ENCODE measurements at regions of chr4 and their contacts with region 1.

Region 1: GRCh38 chr4:4488405-4489404 is 53.1 kb downstream of the STX18 start:
- DNase-seq: peak; percentile 55 to 85
- ATAC-seq: peak; percentile 92 to 99 (median 93)
- H3K4me3 ChIP-seq: no peak overlapping the region
- H3K4me3 Mint-ChIP-seq: no peak overlapping the region
- H3K27ac ChIP-seq: no peak overlapping the region
- H3K27ac Mint-ChIP-seq: no peak overlapping the region
- H3K4me1 ChIP-seq: no peaks in the 10 kb centered on the region
- H3K4me1 Mint-ChIP-seq: peaks cover 11 to 15% of the 10 kb centered on the region in 2 donors
- H3K27me3 ChIP-seq: no peaks in the 10 kb centered on the region
- H3K27me3 Mint-ChIP-seq: no peaks in the 10 kb centered on the region
- CTCF ChIP-seq: peak; percentile 96

Region 2: GRCh38 chr4:4555916-4556315 is 67.2 kb after region 1 on chr4:
- intact Hi-C with region 1: no loop called
- DNase-seq: no peak
- ATAC-seq: no peak
- H3K4me3 ChIP-seq: no peak overlapping the region
- H3K4me3 Mint-ChIP-seq: no peak overlapping the region
- H3K27ac ChIP-seq: no peak overlapping the region
- H3K27ac Mint-ChIP-seq: no peak overlapping the region
- H3K4me1 ChIP-seq: no peaks in the 10 kb centered on the region
- H3K4me1 Mint-ChIP-seq: no peaks in the 10 kb centered on the region
- H3K27me3 ChIP-seq: no peaks in the 10 kb centered on the region
- H3K27me3 Mint-ChIP-seq: no peaks in the 10 kb centered on the region
- CTCF ChIP-seq: no peak

Region 3: DNA sequence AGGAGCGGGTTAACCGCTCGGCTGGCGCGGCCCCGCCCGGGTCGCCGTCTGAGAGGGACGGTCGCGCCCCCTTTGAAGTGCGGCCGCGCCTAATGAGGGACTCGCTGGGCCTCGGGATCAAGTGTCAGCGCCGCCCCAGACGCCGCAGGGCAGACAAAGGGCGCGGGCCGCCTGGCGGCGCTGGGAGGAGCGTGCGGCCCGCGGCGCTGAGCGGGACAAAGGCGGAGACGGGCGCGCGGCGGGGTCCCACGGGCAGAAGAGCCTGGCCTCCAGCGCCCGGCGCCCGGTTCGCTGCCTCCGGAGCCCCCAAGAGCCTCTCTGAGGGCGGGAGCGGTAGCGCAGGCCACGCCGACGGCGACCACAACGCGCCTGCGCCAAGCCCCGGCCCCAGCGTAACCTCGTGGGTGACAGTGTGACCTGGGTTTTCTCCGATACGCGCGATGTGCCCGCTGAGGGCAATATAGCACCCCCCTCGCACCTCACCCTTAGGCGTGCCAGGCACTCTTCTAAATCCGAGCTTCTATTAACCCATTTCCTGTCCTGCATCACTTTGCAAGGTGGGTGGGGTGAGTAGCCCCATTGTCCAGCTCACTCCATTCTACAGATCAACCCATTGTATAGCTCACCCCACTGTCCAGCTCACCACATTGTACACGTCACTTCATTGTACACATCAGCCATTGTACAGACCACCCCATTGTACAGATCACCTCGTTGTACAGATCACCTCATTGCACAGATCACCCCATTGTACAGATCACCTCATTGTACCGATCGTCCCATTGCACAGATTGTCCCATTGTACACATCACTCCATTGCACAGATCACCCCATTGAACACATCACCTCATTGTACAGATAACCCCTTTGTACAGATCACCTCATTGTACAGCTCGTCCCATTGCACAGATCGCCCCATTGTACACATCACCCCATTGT is 86.8 kb after region 1 on chr4:
- intact Hi-C with region 1: loop called (anchors 1 kb)
- DNase-seq: peak; percentile 62 to 80
- ATAC-seq: peak; percentile 87 to 91 (median 90)
- H3K4me3 ChIP-seq: peak overlapping the region; percentile 53
- H3K4me3 Mint-ChIP-seq: peak overlapping the region; percentile 87
- H3K27ac ChIP-seq: peak overlapping the region; percentile 41
- H3K27ac Mint-ChIP-seq: peak overlapping the region; percentile 14 to 82
- H3K4me1 ChIP-seq: peaks cover 11% of the 10 kb centered on the region
- H3K4me1 Mint-ChIP-seq: peaks cover 15 to 18% of the 10 kb centered on the region in 2 donors
- H3K27me3 ChIP-seq: no peaks in the 10 kb centered on the region
- H3K27me3 Mint-ChIP-seq: no peaks in the 10 kb centered on the region
- CTCF ChIP-seq: peak; percentile 34

Region 4: DNA sequence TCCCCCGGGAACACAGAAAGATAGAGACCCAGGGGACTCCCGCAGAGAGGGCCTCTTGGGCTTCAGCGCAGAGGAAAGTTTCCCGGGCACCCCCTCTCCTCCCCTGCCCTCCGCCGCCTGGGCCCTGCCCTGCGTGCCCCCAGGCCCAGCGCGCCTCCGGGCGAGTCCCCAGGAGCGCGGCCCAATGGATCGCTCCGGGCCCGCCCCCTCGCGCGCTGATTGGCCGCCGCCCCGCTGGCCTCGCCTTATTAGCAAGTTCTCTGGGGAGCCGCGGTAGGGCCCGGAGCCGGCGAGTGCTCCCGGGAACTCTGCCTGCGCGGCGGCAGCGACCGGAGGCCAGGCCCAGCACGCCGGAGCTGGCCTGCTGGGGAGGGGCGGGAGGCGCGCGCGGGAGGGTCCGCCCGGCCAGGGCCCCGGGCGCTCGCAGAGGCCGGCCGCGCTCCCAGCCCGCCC is 370.7 kb after region 1 on chr4 and contains the start of gene MSX1:
- intact Hi-C with region 1: loop called (anchors 10 kb)
- DNase-seq: peak; percentile 54 to 55
- ATAC-seq: peak; percentile 72 to 84 (median 79)
- H3K4me3 ChIP-seq: peak within 1 kb of the TSS; percentile 34
- H3K4me3 Mint-ChIP-seq: peak within 1 kb of the TSS; percentile 92
- H3K27ac ChIP-seq: no peak within 1 kb of the TSS
- H3K27ac Mint-ChIP-seq: peak within 1 kb of the TSS in 1 of 2 donors; percentile 44
- H3K4me1 ChIP-seq: peaks cover 55% of the 10 kb centered on the region
- H3K4me1 Mint-ChIP-seq: peaks cover 48 to 49% of the 10 kb centered on the region in 2 donors
- H3K27me3 ChIP-seq: peaks cover 77% of the 10 kb centered on the region
- H3K27me3 Mint-ChIP-seq: peaks cover 73 to 87% of the 10 kb centered on the region in 2 donors
- CTCF ChIP-seq: no peak
- total RNA-seq, gene MSX1: not detected

Region 5: GRCh38 chr4:4995103-4995907 is 506.6 kb after region 1 on chr4:
- intact Hi-C with region 1: loop called (anchors 2 kb)
- DNase-seq: peak; percentile 51 to 55
- ATAC-seq: peak; percentile 34 to 55 (median 54)
- H3K4me3 ChIP-seq: no peak overlapping the region
- H3K4me3 Mint-ChIP-seq: no peak overlapping the region
- H3K27ac ChIP-seq: no peak overlapping the region
- H3K27ac Mint-ChIP-seq: no peak overlapping the region
- H3K4me1 ChIP-seq: peaks cover 21% of the 10 kb centered on the region
- H3K4me1 Mint-ChIP-seq: peaks cover 30 to 33% of the 10 kb centered on the region in 2 donors
- H3K27me3 ChIP-seq: no peaks in the 10 kb centered on the region
- H3K27me3 Mint-ChIP-seq: peaks cover 15 to 24% of the 10 kb centered on the region in 2 donors
- CTCF ChIP-seq: peak; percentile 87

Region 6: DNA sequence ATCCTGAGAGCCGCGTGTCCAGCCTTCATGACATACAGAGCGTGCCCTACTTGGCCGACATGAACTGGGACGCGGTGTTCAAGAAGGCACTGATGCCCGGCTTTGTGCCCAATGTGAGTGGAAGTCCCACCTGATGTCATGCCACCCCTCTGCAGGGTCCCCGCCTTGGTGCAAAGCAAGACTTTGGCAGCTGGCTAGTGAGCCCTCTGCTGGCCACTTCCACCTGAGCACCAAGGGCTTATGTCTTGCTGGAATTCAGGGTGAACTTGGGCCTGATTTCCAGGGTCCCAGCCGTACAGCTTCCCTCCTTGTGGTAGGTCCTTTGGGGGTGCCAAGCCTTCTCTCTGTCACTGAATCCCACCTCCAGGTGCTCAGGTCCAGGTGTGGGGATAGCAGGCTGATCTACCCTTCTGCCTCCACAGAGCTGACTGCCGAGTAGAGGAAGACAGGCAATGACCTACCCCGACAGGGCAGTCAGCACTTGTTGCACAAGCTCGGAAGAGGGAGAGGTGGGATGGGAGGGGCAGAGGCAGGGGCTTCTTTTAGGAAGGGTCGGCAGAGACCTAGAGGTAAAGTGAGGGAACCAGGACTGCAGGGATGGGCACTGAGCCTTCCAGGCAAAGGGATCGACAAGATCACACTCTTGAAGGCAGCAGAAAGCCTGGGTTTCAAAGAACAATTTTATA is 971.6 kb after region 1 on chr4:
- intact Hi-C with region 1: loop called (anchors 2 kb)
- DNase-seq: peak in 1 of 2 donors; percentile 27
- ATAC-seq: no peak
- H3K4me3 ChIP-seq: no peak overlapping the region
- H3K4me3 Mint-ChIP-seq: no peak overlapping the region
- H3K27ac ChIP-seq: no peak overlapping the region
- H3K27ac Mint-ChIP-seq: no peak overlapping the region
- H3K4me1 ChIP-seq: no peaks in the 10 kb centered on the region
- H3K4me1 Mint-ChIP-seq: no peaks in the 10 kb centered on the region
- H3K27me3 ChIP-seq: no peaks in the 10 kb centered on the region
- H3K27me3 Mint-ChIP-seq: no peaks in the 10 kb centered on the region
- CTCF ChIP-seq: no peak

Region 7: GRCh38 chr4:5791654-5792053 is 1302.9 kb after region 1 on chr4:
- intact Hi-C with region 1: loop called (anchors 5 kb)
- DNase-seq: no peak
- ATAC-seq: no peak
- H3K4me3 ChIP-seq: no peak overlapping the region
- H3K4me3 Mint-ChIP-seq: no peak overlapping the region
- H3K27ac ChIP-seq: no peak overlapping the region
- H3K27ac Mint-ChIP-seq: no peak overlapping the region
- H3K4me1 ChIP-seq: no peaks in the 10 kb centered on the region
- H3K4me1 Mint-ChIP-seq: no peaks in the 10 kb centered on the region
- H3K27me3 ChIP-seq: no peaks in the 10 kb centered on the region
- H3K27me3 Mint-ChIP-seq: peaks cover 0 to 3% of the 10 kb centered on the region in 2 donors
- CTCF ChIP-seq: no peak

Region 8: DNA sequence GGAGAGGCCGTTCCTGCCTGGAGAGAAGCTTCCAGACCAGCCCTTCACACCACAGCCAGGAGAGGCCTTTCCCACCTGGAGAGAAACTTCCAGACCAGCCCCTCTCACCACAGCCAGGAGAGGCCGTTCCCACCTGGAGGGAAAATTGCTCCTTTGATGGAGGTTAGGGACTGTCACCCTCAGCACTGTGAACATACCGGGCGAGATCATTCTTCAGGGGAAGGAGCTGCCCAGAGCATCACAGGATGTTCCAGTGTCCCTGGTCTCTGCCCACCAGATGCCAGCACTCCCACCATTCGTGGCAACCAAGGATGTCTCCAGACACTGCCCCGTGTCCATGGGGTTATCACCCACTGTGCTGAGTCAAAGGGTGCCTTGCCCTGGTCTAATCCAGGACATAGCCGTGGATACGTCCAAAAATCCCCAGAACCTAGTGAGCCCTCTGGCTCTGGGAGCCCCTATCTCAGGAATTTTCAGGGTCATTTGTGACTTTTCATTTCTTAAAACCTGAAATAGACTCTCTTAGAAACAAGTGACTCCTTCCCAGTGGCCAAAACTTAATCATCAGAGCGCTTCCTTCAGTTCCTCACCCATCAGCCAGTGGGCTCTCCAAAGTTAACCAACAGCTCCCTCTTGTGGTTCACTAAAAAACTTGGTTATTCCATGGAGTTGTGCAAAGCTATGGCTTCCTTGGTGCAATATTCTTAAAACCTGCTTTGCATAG is 1324.0 kb after region 1 on chr4:
- intact Hi-C with region 1: loop called (anchors 2 kb)
- DNase-seq: peak in 1 of 2 donors; percentile 58
- ATAC-seq: peak in 2 of 3 donors; percentile 43 to 62
- H3K4me3 ChIP-seq: no peak overlapping the region
- H3K4me3 Mint-ChIP-seq: no peak overlapping the region
- H3K27ac ChIP-seq: no peak overlapping the region
- H3K27ac Mint-ChIP-seq: no peak overlapping the region
- H3K4me1 ChIP-seq: no peaks in the 10 kb centered on the region
- H3K4me1 Mint-ChIP-seq: no peaks in the 10 kb centered on the region
- H3K27me3 ChIP-seq: no peaks in the 10 kb centered on the region
- H3K27me3 Mint-ChIP-seq: peaks cover 0 to 6% of the 10 kb centered on the region in 2 donors
- CTCF ChIP-seq: peak; percentile 46